PC-3 (cell line): ENCODE measurements at regions of chr13 and their contacts with region 1.

Region 1: GRCh38 chr13:78137404-78138142 is 218.9 kb upstream of the EDNRB start:
- DNase-seq: peak; percentile 78
- ATAC-seq: peak; percentile 96
- H3K4me3 ChIP-seq: no peak overlapping the region
- H3K27ac ChIP-seq: no peak overlapping the region
- H3K4me1 ChIP-seq: no peaks in the 10 kb centered on the region
- H3K27me3 ChIP-seq: no peaks in the 10 kb centered on the region
- CTCF ChIP-seq: peak; percentile 65

Region 2: GRCh38 chr13:78265098-78265497 is 127.5 kb after region 1 on chr13:
- CTCF ChIA-PET with region 1: no interaction called
- POLR2A ChIA-PET with region 1: no interaction called
- intact Hi-C with region 1: no loop called
- DNase-seq: no peak
- ATAC-seq: no peak
- H3K4me3 ChIP-seq: no peak overlapping the region
- H3K27ac ChIP-seq: no peak overlapping the region
- H3K4me1 ChIP-seq: no peaks in the 10 kb centered on the region
- H3K27me3 ChIP-seq: peaks cover 7% of the 10 kb centered on the region; the same call in 1 of the 2 replicates
- CTCF ChIP-seq: no peak

Region 3: GRCh38 chr13:78689011-78689410 is 551.4 kb after region 1 on chr13:
- CTCF ChIA-PET with region 1: no interaction called
- POLR2A ChIA-PET with region 1: no interaction called
- intact Hi-C with region 1: loop called (anchors 5 kb)
- DNase-seq: peak; percentile 12
- ATAC-seq: peak; percentile 54
- H3K4me3 ChIP-seq: no peak overlapping the region
- H3K27ac ChIP-seq: no peak overlapping the region
- H3K4me1 ChIP-seq: no peaks in the 10 kb centered on the region
- H3K27me3 ChIP-seq: 0 out of 2 replicates have a peak, but pooled peaks cover 4% of the 10 kb centered on the region
- CTCF ChIP-seq: 0 out of 2 replicates have a peak, but pooled peaks have one; percentile 15

Region 4: DNA sequence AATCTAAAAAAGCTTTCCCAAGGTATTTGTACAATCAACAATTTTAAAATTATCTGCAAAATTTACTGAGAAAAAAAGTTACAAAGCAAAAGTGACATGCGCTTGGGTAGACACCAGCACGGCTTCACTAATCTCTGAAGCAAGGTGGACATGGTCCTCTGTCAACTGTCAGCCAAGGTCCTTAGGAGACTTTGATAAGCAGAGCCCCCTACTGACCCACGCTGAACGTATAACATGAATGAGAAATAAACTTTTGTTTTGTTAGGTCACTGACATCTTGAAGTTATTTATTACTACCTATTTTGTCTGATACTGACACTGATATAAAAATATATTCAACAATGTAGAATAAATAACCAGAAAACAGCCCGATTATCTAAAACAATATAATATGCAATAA is 622.1 kb after region 1 on chr13:
- CTCF ChIA-PET with region 1: no interaction called
- POLR2A ChIA-PET with region 1: no interaction called
- intact Hi-C with region 1: loop called (anchors 10 kb)
- DNase-seq: no peak
- ATAC-seq: no peak
- H3K4me3 ChIP-seq: no peak overlapping the region
- H3K27ac ChIP-seq: no peak overlapping the region
- H3K4me1 ChIP-seq: no peaks in the 10 kb centered on the region
- H3K27me3 ChIP-seq: peaks cover 66% of the 10 kb centered on the region
- CTCF ChIP-seq: 0 out of 2 replicates have a peak, but pooled peaks have one; percentile 14

Region 5: GRCh38 chr13:78978381-78978998 is 840.9 kb after region 1 on chr13:
- CTCF ChIA-PET with region 1: interaction called, 8 read pairs
- POLR2A ChIA-PET with region 1: no interaction called
- intact Hi-C with region 1: loop called (anchors 1 kb)
- DNase-seq: peak; percentile 68
- ATAC-seq: peak; percentile 76
- H3K4me3 ChIP-seq: no peak overlapping the region
- H3K27ac ChIP-seq: no peak overlapping the region
- H3K4me1 ChIP-seq: no peaks in the 10 kb centered on the region
- H3K27me3 ChIP-seq: peaks cover 40% of the 10 kb centered on the region
- CTCF ChIP-seq: peak; percentile 66